Activated CD8-positive, alpha-beta T cell treated with anti-CD3 and anti-CD28 coated beads for 36 hours (primary cell): ENCODE measurements at regions of chr21 and their contacts with region 1.

Region 1: DNA sequence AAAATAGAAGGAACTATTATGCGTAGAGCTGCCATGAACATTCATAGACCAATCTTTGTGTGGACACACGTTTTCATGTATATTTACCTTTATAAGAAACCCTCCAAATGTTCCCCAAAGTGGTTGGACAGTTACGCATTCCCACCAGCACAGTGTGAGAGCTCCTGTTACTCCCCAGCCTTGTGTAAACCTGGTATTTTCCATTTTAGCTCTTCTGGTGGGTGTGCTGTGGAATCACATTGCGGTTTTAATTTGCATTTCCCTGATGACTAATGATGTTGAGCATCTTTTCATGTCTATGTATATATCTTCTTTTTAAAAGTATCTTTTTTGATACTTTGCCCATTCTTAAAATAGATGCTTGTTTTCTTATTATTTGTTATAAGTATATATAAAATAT is 3.2 kb upstream of the UBASH3A start:
- DNase-seq: no peak
- ATAC-seq: peak; percentile 20
- H3K4me3 Mint-ChIP-seq: peak overlapping the region; percentile 55
- H3K27ac Mint-ChIP-seq: peak overlapping the region; percentile 82
- H3K4me1 Mint-ChIP-seq: peaks cover 53% of the 10 kb centered on the region
- H3K27me3 Mint-ChIP-seq: no peaks in the 10 kb centered on the region
- CTCF ChIP-seq: no peak

Region 2: DNA sequence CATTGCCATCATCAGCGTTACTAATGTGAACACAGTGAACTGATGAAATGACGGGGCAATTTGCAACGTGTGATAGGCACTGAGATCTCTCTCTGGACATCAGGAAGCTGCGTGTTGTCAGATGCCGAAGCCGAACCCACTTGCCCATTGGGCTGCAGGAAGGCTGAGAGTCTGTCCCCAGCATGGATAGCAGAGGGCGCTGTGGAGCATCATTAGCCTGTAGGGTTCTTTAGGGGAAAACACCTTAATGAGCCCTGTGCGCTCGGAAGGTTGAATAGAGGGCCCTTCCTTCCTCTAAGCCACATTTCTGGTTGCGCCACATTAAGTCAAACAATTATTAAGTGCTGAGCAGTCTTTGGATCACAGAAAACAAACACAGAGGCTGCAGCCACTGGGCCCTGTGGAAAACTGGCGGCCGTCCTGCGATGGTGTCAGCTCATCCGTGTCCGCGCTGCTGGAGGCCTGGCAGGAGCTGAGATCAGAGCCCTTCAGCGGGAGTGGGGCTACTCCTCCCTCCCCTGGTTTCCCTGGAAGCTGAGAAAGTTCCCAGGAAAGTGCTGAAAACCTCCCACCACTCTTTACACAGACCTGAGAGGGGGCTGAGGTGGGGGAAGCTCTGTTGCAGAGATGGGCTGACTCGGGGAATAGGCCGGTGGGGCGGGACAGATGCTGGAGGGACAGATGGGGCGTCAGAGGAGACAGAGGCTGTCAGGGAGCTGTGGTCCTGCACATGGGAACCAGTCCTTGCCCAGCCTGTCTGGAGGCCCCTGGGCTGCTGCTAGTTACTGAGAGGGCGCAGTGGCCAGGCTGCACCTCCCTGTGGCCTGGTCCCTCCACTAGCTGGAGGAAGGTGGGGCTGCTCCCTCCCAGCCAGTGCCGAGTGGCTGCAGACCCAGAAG is 62.4 kb before region 1 on chr21:
- CTCF ChIA-PET with region 1: interaction called, 19 read pairs
- POLR2A ChIA-PET with region 1: interaction called, 6 read pairs
- intact Hi-C with region 1: no loop called
- DNase-seq: peak; percentile 94
- ATAC-seq: peak; percentile 99
- H3K4me3 Mint-ChIP-seq: no peak overlapping the region
- H3K27ac Mint-ChIP-seq: peak overlapping the region; percentile 63
- H3K4me1 Mint-ChIP-seq: peaks cover 17% of the 10 kb centered on the region
- H3K27me3 Mint-ChIP-seq: no peaks in the 10 kb centered on the region
- CTCF ChIP-seq: peak; percentile 91

Region 3: DNA sequence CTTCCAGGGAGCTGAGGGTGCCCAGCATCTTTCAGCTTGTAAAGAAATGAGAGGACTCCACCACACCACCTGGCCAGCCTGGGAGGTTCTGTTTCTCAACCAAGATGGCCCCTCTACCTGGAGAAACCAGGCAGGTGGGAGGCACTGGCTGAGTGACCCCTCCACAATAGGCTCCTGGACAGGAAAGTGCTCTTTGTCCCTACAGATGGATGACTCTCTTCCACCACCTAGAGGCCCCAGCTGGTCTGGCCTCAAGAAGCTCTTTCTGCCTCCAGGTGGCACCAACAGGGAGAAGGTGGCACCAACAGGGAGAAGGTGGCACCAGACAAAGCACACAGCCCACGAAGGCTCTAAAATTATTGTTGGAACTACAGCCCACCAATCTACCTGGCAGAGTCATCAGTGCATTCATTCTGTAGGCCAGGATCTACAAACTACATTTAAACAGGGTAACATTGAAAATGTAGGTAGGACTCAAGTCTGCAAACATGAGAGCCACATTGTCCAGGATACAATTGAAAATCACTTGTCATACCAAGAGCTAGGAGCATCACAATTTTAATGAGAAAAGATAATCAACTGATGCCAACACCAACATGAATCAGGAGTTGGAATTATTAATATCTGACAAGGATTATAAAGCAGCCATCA is 19.1 kb before region 1 on chr21:
- CTCF ChIA-PET with region 1: interaction called, 15 read pairs
- POLR2A ChIA-PET with region 1: interaction called, 7 read pairs
- intact Hi-C with region 1: no loop called
- DNase-seq: peak; percentile 53
- ATAC-seq: peak; percentile 68
- H3K4me3 Mint-ChIP-seq: no peak overlapping the region
- H3K27ac Mint-ChIP-seq: no peak overlapping the region
- H3K4me1 Mint-ChIP-seq: peaks cover 20% of the 10 kb centered on the region
- H3K27me3 Mint-ChIP-seq: no peaks in the 10 kb centered on the region
- CTCF ChIP-seq: peak; percentile 70

Region 4: GRCh38 chr21:42424914-42425541 is 24.5 kb after region 1 on chr21:
- CTCF ChIA-PET with region 1: interaction called, 46 read pairs
- POLR2A ChIA-PET with region 1: interaction called, 133 read pairs
- intact Hi-C with region 1: no loop called
- DNase-seq: peak; percentile 87
- ATAC-seq: peak; percentile 65
- H3K4me3 Mint-ChIP-seq: peak overlapping the region; percentile 74
- H3K27ac Mint-ChIP-seq: peak overlapping the region; percentile 93
- H3K4me1 Mint-ChIP-seq: peaks cover 73% of the 10 kb centered on the region
- H3K27me3 Mint-ChIP-seq: no peaks in the 10 kb centered on the region
- CTCF ChIP-seq: no peak

Region 5: DNA sequence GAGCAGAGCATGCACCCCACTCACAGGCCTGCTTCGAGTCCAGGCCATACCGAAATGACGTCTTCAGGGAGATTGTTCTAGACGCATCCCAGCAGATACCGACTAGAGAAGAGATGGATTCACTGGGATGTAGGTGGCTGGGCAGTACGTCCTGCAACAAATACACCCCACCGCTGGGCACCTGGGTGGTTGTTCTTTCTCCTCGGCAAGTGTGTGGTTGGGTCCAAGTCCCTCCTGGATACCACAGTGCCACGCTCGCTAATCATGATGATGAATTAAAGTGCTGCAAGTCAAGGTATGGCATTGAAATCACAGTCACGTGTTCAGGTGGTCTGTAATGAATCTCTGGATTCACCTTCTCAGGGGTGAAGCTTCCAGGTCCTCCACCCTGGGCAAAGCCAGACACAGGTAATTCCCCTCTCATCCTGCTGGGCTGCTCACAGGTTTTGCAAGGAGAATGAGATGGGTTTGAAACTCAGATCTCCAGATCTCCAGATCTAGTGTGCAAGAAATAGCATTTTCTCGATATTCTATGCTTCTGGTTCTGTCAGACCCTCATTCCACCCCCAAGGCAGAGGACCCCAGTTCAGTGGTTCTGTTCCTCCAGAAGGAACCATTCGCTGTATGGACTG is 48.9 kb after region 1 on chr21:
- CTCF ChIA-PET with region 1: interaction called, 10 read pairs
- POLR2A ChIA-PET with region 1: interaction called, 4 read pairs
- intact Hi-C with region 1: loop called (anchors 5 kb)
- DNase-seq: no peak
- ATAC-seq: no peak
- H3K4me3 Mint-ChIP-seq: no peak overlapping the region
- H3K27ac Mint-ChIP-seq: peak overlapping the region; percentile 84
- H3K4me1 Mint-ChIP-seq: peaks cover 57% of the 10 kb centered on the region
- H3K27me3 Mint-ChIP-seq: no peaks in the 10 kb centered on the region
- CTCF ChIP-seq: no peak